Right lobe of liver (tissue), 6 donors: ENCODE measurements at regions of chr2 and their contacts with region 1.

Region 1: GRCh38 chr2:118046634-118047210 is 32.9 kb upstream of the CCDC93 start:
- DNase-seq: no peak
- ATAC-seq: peak; percentile 85 to 93 (median 86)
- H3K4me3 ChIP-seq: peak overlapping the region; percentile 0 to 20 (median 5)
- H3K27ac ChIP-seq: peak overlapping the region in 1 of 3 donors; percentile 0
- H3K4me1 ChIP-seq: peaks cover 0 to 10% (median 0%) of the 10 kb centered on the region in 4 donors
- H3K27me3 ChIP-seq: no peaks in the 10 kb centered on the region
- CTCF ChIP-seq: peak; percentile 58 to 70 (median 69)
- POLR2A ChIP-seq: no peak

Region 2: DNA sequence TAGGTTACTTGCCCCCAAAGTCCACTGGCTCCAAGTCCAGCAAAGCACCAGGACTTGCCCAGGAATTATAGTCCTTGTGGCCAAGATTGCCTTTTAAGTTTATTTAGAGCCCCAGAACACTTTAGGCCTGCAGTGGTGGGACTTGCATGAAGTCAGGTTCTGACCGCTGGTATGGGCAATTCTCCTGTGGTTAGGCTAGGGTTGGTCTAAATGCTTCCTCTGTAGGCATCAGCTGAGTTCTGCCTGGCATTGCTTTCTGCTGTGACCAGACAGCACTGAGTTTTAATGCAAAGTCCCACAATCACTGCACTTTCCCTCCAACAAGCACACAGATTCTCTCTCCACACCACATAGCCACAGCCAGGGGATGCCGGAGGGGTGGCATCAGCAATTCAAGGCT is 167.7 kb before region 1 on chr2:
- intact Hi-C with region 1: no loop called
- DNase-seq: no peak
- ATAC-seq: no peak
- H3K4me3 ChIP-seq: no peak overlapping the region
- H3K27ac ChIP-seq: no peak overlapping the region
- H3K4me1 ChIP-seq: no peaks in the 10 kb centered on the region
- H3K27me3 ChIP-seq: no peaks in the 10 kb centered on the region
- CTCF ChIP-seq: no peak
- POLR2A ChIP-seq: no peak

Region 3: DNA sequence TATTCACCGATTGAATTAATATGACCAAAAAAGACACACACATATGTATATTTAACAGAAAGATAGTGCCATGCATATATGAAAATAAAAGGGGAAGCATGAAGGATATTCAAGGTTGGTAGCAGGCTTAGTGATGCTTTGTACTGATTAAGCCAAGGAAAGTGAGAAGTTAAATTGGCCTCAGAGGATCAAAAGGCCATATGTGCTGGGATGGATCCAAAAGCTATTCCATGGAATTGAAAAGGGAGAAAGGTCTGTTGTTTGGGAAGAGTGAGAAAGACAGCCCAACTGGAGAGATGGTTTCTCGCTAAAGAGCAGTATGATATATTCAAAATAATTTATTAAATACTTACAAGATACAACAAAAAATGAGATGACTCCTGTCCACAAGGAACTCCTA is 107.5 kb after region 1 on chr2:
- intact Hi-C with region 1: loop called in 1 of 2 experiments (anchors 10 kb)
- DNase-seq: no peak
- ATAC-seq: no peak
- H3K4me3 ChIP-seq: no peak overlapping the region
- H3K27ac ChIP-seq: no peak overlapping the region
- H3K4me1 ChIP-seq: no peaks in the 10 kb centered on the region
- H3K27me3 ChIP-seq: no peaks in the 10 kb centered on the region
- CTCF ChIP-seq: no peak
- POLR2A ChIP-seq: no peak

Region 4: GRCh38 chr2:118265873-118266455 is 219.2 kb after region 1 on chr2:
- intact Hi-C with region 1: no loop called
- DNase-seq: no peak
- ATAC-seq: no peak
- H3K4me3 ChIP-seq: no peak overlapping the region
- H3K27ac ChIP-seq: no peak overlapping the region
- H3K4me1 ChIP-seq: no peaks in the 10 kb centered on the region
- H3K27me3 ChIP-seq: no peaks in the 10 kb centered on the region
- CTCF ChIP-seq: no peak
- POLR2A ChIP-seq: no peak